SK-MEL-5 (cell line): ENCODE measurements at regions of chr11 and their contacts with region 1.

Region 1: DNA sequence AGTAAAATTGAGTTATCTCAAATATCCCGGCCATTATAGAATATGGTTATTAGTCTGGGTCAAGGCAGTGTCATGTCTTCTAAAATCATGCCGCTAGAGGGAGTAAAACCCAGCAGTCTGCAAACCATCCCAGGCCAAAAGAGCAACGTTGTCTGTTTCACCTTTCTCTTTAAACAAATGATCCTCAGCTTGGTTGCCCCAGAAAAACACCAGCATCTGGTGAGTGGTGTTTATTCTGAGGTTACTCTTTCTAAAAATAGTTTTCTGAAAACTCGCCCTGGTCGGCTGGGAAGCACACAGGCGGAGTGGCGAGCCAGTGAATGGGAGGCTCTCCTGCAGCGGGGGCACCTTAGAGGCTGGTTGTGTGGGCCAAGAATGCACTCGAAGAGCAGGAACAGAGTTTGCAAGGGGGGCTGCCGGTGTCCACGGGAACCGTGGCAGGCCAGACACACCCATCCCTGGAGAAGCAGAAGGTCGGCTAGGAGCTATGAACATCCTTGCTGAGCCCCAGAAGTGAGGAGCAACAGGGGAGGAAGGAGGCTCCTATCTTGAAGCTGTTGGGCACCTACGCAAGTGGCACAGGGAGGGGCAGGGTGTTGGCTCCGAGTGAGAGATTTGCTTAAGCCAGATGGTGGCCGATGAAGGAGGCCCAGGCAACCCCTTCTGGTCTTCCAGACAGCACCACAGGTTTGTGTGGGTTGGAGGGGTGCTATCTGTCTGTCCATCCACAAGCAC is 297.1 kb downstream of the ETS1 start:
- DNase-seq: peak; percentile 75

Region 2: GRCh38 chr11:127925475-127925874 is 364.8 kb before region 1 on chr11:
- in situ Hi-C with region 1: no loop called
- DNase-seq: no peak

Region 3: GRCh38 chr11:128157423-128158298 is 132.6 kb before region 1 on chr11:
- in situ Hi-C with region 1: loop called (anchors 25 kb)
- DNase-seq: peak; percentile 76

Region 4: GRCh38 chr11:128630367-128631230 is 340.3 kb after region 1 on chr11:
- in situ Hi-C with region 1: loop called (anchors 25 kb)
- DNase-seq: peak; percentile 82